Activated CD8-positive, alpha-beta T cell treated with anti-CD3 and anti-CD28 coated beads, Interleukin-2, amount 10 ng/mL, durations not matched to agents 7 days and 5 days (primary cell): ENCODE measurements at regions of chr1 and their contacts with region 1.

Region 1: GRCh38 chr1:20151906-20152598 is 12.9 kb downstream of the PLA2G2F start:
- DNase-seq: peak; percentile 85
- ATAC-seq: peak; percentile 93
- H3K4me3 Mint-ChIP-seq: peak overlapping the region; percentile 61
- H3K27ac Mint-ChIP-seq: peak overlapping the region; percentile 80
- H3K4me1 Mint-ChIP-seq: peaks cover 19% of the 10 kb centered on the region
- H3K27me3 Mint-ChIP-seq: no peaks in the 10 kb centered on the region

Region 2: GRCh38 chr1:19882111-19883071 is 269.7 kb before region 1 on chr1 and contains the start of gene OTUD3:
- CTCF ChIA-PET with region 1: interaction called, 13 read pairs
- POLR2A ChIA-PET with region 1: no interaction called
- DNase-seq: peak; percentile 97
- ATAC-seq: peak; percentile 97
- H3K4me3 Mint-ChIP-seq: peak within 1 kb of the TSS; percentile 83
- H3K27ac Mint-ChIP-seq: peak within 1 kb of the TSS; percentile 74
- H3K4me1 Mint-ChIP-seq: peaks cover 28% of the 10 kb centered on the region
- H3K27me3 Mint-ChIP-seq: no peaks in the 10 kb centered on the region
- total RNA-seq, gene OTUD3: 9.7 to 10.4 TPM

Region 3: DNA sequence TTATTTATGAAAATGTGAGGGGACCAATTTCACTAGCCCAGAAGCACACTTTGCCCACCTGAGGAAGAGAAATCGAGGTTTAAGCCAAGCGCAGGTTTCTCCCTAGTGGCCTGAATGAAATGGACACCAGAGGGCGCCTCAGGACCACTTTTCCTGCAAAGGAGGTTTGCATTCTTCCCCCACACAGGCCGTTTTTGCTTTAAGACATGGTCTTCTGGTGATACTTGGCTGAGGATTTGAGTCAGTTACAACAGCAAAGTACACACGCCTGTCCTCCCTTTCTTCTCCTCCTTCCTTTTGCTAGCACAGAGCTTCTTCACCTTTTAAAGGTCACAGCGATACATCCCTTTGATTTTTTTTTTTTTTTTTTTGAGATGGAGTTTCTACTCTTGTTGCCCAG is 234.0 kb before region 1 on chr1:
- CTCF ChIA-PET with region 1: interaction called, 74 read pairs
- POLR2A ChIA-PET with region 1: no interaction called
- DNase-seq: peak; percentile 88
- ATAC-seq: peak; percentile 74
- H3K4me3 Mint-ChIP-seq: no peak overlapping the region
- H3K27ac Mint-ChIP-seq: no peak overlapping the region
- H3K4me1 Mint-ChIP-seq: peaks cover 4% of the 10 kb centered on the region
- H3K27me3 Mint-ChIP-seq: no peaks in the 10 kb centered on the region

Region 4: GRCh38 chr1:20137043-20137442 is 15.0 kb before region 1 on chr1:
- CTCF ChIA-PET with region 1: no interaction called
- POLR2A ChIA-PET with region 1: no interaction called
- DNase-seq: no peak
- ATAC-seq: no peak
- H3K4me3 Mint-ChIP-seq: no peak overlapping the region
- H3K27ac Mint-ChIP-seq: no peak overlapping the region
- H3K4me1 Mint-ChIP-seq: no peaks in the 10 kb centered on the region
- H3K27me3 Mint-ChIP-seq: peaks cover 26% of the 10 kb centered on the region

Region 5: DNA sequence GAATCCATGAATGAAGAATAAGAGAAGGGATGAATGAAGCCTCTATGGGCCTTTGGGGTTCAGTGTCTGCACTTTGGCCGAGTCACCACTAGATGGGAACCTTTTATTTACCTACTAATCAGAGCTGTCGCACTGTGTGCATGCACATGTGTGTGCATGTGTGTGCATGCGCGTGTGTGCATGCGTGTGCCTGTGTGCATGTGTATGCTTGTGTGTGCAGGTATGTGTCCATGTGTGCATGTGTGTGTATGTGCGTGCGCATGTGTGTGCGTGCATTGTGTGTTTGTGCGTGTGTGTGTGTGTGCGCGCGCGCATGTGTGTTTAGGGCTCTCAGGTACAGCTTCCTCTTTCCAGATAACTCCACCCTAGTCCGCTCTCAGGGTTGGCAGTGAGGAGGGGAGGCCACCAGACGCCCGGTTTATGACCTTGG is 13.5 kb after region 1 on chr1:
- CTCF ChIA-PET with region 1: interaction called, 17 read pairs
- POLR2A ChIA-PET with region 1: no interaction called
- DNase-seq: peak; percentile 30
- ATAC-seq: no peak
- H3K4me3 Mint-ChIP-seq: no peak overlapping the region
- H3K27ac Mint-ChIP-seq: no peak overlapping the region
- H3K4me1 Mint-ChIP-seq: no peaks in the 10 kb centered on the region
- H3K27me3 Mint-ChIP-seq: peaks cover 12% of the 10 kb centered on the region

Region 6: GRCh38 chr1:20416706-20417105 is 264.7 kb after region 1 on chr1:
- CTCF ChIA-PET with region 1: no interaction called
- POLR2A ChIA-PET with region 1: no interaction called
- DNase-seq: no peak
- ATAC-seq: no peak
- H3K4me3 Mint-ChIP-seq: no peak overlapping the region
- H3K27ac Mint-ChIP-seq: no peak overlapping the region
- H3K4me1 Mint-ChIP-seq: peaks cover 3% of the 10 kb centered on the region
- H3K27me3 Mint-ChIP-seq: peaks cover 26% of the 10 kb centered on the region